Mammary epithelial cell (primary cell): ENCODE measurements at regions of chr12 and their contacts with region 1.

Region 1: GRCh38 chr12:110100315-110100970 is 23.7 kb upstream of the IFT81 start:
- DNase-seq: peak; percentile 32
- H3K4me3 ChIP-seq: no peak overlapping the region
- H3K27ac ChIP-seq: no peak overlapping the region
- H3K4me1 ChIP-seq: peaks cover 3% of the 10 kb centered on the region
- H3K27me3 ChIP-seq: no peaks in the 10 kb centered on the region
- CTCF ChIP-seq: peak; percentile 92 to 97

Region 2: GRCh38 chr12:110141389-110141788 is 40.9 kb after region 1 on chr12:
- CTCF ChIA-PET with region 1: no interaction called
- dilution Hi-C with region 1: no loop called
- in situ Hi-C with region 1: no loop called
- intact Hi-C with region 1: no loop called
- DNase-seq: no peak
- H3K4me3 ChIP-seq: no peak overlapping the region
- H3K27ac ChIP-seq: no peak overlapping the region
- H3K4me1 ChIP-seq: no peaks in the 10 kb centered on the region
- H3K27me3 ChIP-seq: no peaks in the 10 kb centered on the region
- CTCF ChIP-seq: no peak

Region 3: DNA sequence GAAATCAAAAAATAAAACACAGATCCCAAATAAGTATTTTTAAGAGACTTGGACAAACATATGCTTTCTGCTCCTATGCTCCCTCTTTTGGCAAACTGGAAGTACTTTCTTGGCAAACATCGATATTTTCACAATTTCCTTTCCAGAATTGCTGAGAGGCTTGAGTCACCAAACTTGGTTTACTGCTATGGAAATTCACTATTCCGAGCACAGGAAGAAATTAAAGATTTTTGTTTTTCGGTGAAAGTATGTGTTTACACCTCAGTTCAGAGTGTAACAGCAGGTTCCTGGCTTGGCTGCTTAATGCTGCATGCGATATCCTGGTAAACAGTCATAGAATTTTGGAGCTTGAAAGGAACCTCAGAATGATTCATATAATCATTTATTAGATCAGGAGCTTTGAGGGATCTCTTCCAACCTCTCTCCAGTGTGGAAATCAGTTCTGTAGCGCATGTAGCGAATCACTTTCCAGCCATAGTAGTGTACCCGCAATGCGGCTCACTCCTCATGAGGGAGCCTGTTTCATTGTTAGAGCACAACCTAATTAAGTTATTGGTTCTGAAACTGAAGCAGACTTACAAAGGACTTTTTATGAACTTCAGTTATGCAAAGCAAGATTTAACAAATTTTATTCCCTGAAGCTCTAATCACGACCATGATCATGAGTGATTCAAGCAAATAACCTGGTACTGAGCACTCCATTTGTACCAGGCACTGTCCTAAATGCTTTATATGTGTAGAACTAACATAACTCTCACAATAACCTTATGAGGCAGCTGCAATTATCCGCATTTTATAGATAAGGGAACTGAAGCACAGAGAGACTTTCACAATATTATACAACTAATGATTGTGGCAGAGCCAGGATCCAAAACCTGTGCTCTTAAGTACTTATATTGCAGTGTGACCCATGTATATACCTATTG is 124.2 kb after region 1 on chr12:
- CTCF ChIA-PET with region 1: no interaction called
- dilution Hi-C with region 1: no loop called
- in situ Hi-C with region 1: loop called in 1 of 2 experiments (anchors 10 kb)
- intact Hi-C with region 1: loop called (anchors 1 kb)
- DNase-seq: peak; percentile 74
- H3K4me3 ChIP-seq: peak overlapping the region; percentile 14 to 40 (median 36)
- H3K27ac ChIP-seq: peak overlapping the region; percentile 95
- H3K4me1 ChIP-seq: peaks cover 25% of the 10 kb centered on the region
- H3K27me3 ChIP-seq: no peaks in the 10 kb centered on the region
- CTCF ChIP-seq: peak; percentile 57 to 69

Region 4: GRCh38 chr12:110349531-110350151 is 249.2 kb after region 1 on chr12:
- CTCF ChIA-PET with region 1: no interaction called
- dilution Hi-C with region 1: no loop called
- in situ Hi-C with region 1: no loop called
- intact Hi-C with region 1: loop called (anchors 5 kb)
- DNase-seq: no peak
- H3K4me3 ChIP-seq: no peak overlapping the region
- H3K27ac ChIP-seq: no peak overlapping the region
- H3K4me1 ChIP-seq: peaks cover 16% of the 10 kb centered on the region
- H3K27me3 ChIP-seq: no peaks in the 10 kb centered on the region
- CTCF ChIP-seq: no peak

Region 5: DNA sequence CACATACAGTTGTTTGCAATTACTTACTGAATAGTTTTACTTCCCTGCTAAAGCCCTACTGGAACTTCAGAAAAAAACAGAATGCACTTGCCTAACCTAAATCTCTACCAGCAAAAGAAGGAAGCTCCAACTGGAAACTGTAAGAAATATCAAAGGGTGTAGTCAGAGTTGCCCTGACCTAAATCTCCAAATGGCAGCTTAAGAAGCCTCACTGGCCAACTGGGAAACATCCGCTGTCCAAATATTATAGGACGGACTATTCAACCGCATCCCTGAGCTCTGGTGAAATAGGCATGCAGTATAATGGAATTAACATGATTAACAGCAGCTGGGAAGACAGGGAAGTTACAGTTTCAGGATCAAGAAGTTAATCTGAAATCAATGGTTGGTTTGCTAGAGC is 278.8 kb after region 1 on chr12:
- CTCF ChIA-PET with region 1: no interaction called
- dilution Hi-C with region 1: no loop called
- in situ Hi-C with region 1: no loop called
- intact Hi-C with region 1: no loop called
- DNase-seq: no peak
- H3K4me3 ChIP-seq: no peak overlapping the region
- H3K27ac ChIP-seq: no peak overlapping the region
- H3K4me1 ChIP-seq: no peaks in the 10 kb centered on the region
- H3K27me3 ChIP-seq: no peaks in the 10 kb centered on the region
- CTCF ChIP-seq: no peak

Region 6: GRCh38 chr12:110431957-110432587 is 331.6 kb after region 1 on chr12:
- CTCF ChIA-PET with region 1: interaction called, 5 read pairs
- dilution Hi-C with region 1: no loop called
- in situ Hi-C with region 1: loop called (anchors 5 kb)
- intact Hi-C with region 1: loop called (anchors 1 kb)
- DNase-seq: no peak
- H3K4me3 ChIP-seq: no peak overlapping the region
- H3K27ac ChIP-seq: no peak overlapping the region
- H3K4me1 ChIP-seq: no peaks in the 10 kb centered on the region
- H3K27me3 ChIP-seq: no peaks in the 10 kb centered on the region
- CTCF ChIP-seq: no peak